ENCODE measurements at regions of chr7 and their contacts with region 1.

Region 1: GRCh38 chr7:29255906-29256782 is 61.6 kb downstream of the CHN2 start:
- DNase-seq: peak; percentile 56
- H3K4me3 Mint-ChIP-seq: peak overlapping the region; percentile 36
- H3K27ac Mint-ChIP-seq: peak overlapping the region; percentile 53
- H3K4me1 Mint-ChIP-seq: peaks cover 24% of the 10 kb centered on the region
- H3K27me3 Mint-ChIP-seq: no peaks in the 10 kb centered on the region
- CTCF ChIP-seq: no peak

Region 2: GRCh38 chr7:29177963-29178600 is 78.1 kb before region 1 on chr7:
- CTCF ChIA-PET with region 1: no interaction called
- intact Hi-C with region 1: no loop called
- DNase-seq: peak; percentile 43
- H3K4me3 Mint-ChIP-seq: no peak overlapping the region
- H3K27ac Mint-ChIP-seq: no peak overlapping the region
- H3K4me1 Mint-ChIP-seq: peaks cover 10% of the 10 kb centered on the region
- H3K27me3 Mint-ChIP-seq: no peaks in the 10 kb centered on the region
- CTCF ChIP-seq: no peak

Region 3: DNA sequence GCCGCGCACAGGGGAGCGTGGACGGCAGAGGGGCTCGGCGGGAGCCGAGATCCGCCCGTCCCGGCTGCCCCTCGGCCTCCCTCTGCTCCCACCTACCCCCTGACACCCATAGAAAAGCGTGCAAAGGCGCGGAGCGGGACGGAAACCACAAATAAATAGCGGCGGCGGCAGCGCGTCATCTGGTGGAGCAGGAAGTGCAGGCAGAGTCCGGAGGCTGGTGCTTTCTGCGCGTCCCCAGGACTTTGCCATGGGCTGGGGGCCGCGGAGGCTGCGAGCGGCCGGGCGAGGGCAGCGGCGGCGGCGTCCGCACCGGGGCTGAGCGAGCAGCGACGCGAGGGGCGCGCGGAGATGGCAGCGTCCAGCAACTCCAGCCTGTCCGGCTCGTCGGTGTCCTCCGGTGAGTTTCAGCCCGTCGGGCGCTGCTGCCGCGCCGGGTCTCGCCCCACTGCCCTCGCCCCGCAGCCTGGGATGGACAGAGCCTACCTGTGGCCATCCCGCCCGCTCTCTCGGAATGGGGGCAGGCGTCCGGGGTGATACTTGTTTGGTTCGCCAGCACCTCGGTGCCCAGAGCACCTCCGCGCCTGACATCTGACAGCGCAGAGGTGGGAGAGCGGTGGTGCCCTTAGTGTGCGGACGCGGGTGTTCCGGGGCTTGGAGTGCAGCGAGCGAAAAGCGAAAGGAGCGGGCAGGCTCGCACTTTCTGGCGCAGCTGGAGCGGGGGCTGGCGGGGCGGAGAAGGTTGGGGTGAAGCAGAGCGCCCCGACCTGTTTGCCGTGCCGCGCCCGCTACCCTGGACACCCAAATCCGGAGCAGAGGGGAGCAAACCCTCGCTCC is 61.3 kb before region 1 on chr7 and contains the start of gene CHN2:
- CTCF ChIA-PET with region 1: no interaction called
- intact Hi-C with region 1: loop called (anchors 5 kb)
- DNase-seq: peak; percentile 70
- H3K4me3 Mint-ChIP-seq: peak within 1 kb of the TSS; percentile 66
- H3K27ac Mint-ChIP-seq: peak within 1 kb of the TSS; percentile 16
- H3K4me1 Mint-ChIP-seq: peaks cover 23% of the 10 kb centered on the region
- H3K27me3 Mint-ChIP-seq: peaks cover 14% of the 10 kb centered on the region
- CTCF ChIP-seq: no peak
- total RNA-seq, gene CHN2: 9.7 and 12.4 TPM in 2 replicates

Region 4: GRCh38 chr7:29285444-29285793 is 29.3 kb after region 1 on chr7:
- CTCF ChIA-PET with region 1: no interaction called
- intact Hi-C with region 1: loop called (anchors 2 kb)
- DNase-seq: peak; percentile 74
- H3K4me3 Mint-ChIP-seq: no peak overlapping the region
- H3K27ac Mint-ChIP-seq: peak overlapping the region; percentile 82
- H3K4me1 Mint-ChIP-seq: peaks cover 40% of the 10 kb centered on the region
- H3K27me3 Mint-ChIP-seq: no peaks in the 10 kb centered on the region
- CTCF ChIP-seq: no peak

Region 5: DNA sequence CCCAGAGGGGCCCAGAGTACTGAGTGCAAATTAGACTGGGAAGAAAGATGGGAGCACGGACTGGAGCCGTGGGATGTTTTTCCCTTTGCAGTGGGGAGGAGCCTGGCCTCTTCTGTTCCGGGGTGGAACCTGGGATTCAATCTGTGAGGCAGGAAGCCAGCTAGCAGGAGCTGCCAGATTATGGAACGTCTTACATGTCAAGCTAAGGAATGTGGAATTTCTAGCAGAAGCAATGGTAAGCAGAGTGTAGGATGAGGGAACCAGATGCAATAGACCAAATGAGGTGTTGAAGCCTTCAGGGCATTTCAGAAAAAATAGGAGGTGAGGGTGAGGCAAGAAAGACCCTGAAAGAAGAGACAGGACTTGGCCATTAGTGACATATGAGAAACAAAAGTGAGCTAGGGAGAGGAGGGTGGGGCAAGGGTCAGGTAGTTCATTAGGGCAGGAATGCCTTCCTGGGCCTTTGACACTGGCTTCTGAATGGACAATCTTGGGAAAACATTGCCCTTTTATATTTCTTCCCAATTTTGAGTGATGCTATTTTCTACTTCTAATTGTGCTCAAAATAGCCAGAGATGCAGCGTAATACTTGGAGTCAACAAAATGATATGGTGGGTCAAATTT is 44.0 kb after region 1 on chr7:
- CTCF ChIA-PET with region 1: no interaction called
- intact Hi-C with region 1: loop called (anchors 1 kb)
- DNase-seq: no peak
- H3K4me3 Mint-ChIP-seq: no peak overlapping the region
- H3K27ac Mint-ChIP-seq: peak overlapping the region; percentile 16
- H3K4me1 Mint-ChIP-seq: peaks cover 12% of the 10 kb centered on the region
- H3K27me3 Mint-ChIP-seq: peaks cover 33% of the 10 kb centered on the region
- CTCF ChIP-seq: no peak

Region 6: DNA sequence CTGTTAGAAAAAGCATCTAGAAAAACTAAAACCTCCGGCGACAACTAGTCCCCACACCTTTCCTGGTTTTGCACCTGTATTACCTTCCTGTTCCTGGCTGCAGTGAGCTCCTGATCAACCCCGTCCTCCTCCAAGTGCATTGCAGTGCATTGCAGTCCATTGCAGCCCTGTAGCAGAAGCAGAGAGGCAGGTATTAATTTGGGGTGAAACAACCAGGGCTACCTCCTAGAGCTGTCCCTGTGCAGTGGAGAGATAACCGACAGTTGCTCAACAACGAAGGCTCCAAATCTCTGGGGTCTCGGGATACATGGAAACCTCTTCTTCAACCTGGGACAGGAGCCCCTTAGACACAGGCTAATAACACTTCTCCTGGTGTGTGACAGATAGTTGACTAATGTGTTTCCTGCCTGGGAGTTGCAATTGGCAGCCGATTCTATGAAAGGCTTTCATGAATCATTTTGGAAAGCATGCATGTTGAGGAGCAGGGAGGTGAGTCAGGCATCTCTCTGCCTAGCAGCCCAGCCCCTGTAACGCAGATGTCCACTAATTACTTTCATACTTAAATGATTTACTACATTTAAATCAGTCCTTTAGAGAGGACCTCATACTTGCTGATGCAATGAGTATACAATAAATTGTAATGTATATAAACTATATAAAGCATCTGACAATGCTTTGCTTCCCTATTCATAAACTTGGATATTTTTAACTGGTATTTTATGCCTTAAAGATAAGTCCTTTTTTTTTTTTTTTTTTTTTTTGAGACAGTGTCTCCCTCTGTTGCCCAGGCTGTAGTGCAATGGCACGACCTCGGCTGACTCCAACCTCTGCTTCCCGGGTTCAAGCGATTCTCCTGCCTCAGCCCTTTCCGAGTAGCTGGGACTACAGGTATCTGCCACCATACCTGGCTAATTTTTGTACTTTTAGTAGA is 366.5 kb after region 1 on chr7:
- CTCF ChIA-PET with region 1: no interaction called
- intact Hi-C with region 1: no loop called
- DNase-seq: peak; percentile 71
- H3K4me3 Mint-ChIP-seq: no peak overlapping the region
- H3K27ac Mint-ChIP-seq: peak overlapping the region; percentile 84
- H3K4me1 Mint-ChIP-seq: peaks cover 17% of the 10 kb centered on the region
- H3K27me3 Mint-ChIP-seq: no peaks in the 10 kb centered on the region
- CTCF ChIP-seq: no peak

Measured in Calu3 (cell line).